ENCODE measurements at regions of chr12 and their contacts with region 1.

Region 1: DNA sequence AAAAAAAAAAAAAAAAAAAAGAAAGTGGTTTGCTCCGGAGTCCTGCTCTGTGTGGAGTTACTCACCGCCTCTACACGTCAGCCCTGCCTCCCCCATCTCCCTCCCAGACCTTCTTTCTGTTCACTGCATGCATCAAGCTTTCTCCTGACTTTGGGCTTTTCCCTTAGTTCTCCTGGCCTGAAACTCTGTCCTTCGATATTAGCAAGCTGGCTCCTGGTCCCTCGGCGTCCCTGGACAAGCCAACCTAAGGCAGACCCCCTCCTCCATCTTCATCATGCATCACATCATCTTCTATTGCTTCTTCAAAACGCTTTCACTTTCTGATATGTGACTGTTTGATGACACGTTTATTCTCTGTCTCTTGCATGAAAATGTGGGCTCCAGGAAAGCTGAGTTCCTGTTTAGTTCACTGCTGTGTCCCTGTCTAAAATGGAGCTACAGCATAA is 40.6 kb downstream of the SLC15A4 start:
- DNase-seq: peak; percentile 70
- ATAC-seq: peak; percentile 91
- H3K4me3 Mint-ChIP-seq: peak overlapping the region; percentile 61
- H3K27ac Mint-ChIP-seq: peak overlapping the region; percentile 98
- H3K4me1 Mint-ChIP-seq: peaks cover 12% of the 10 kb centered on the region
- H3K27me3 Mint-ChIP-seq: no peaks in the 10 kb centered on the region

Region 2: DNA sequence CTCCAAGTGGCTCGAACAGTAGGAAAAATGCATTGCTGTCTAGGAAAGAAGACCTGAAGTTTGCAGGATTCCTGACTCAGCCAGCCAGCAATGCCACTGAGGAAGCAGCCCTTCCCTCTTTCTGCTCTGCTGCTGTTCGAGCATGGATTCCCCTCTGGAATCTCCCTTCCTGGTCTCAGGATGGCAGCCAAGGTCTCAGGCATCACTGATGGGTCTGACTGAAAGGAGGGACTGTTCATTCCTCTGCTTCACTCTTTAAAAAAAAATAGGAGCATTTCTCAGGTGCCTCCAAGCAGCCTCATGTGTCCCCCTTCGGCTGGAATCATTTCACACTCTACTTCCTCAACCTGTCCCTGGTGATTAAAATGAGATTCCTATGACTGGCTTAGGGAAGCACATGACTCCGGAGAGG is 21.8 kb before region 1 on chr12:
- CTCF ChIA-PET with region 1: no interaction called
- POLR2A ChIA-PET with region 1: no interaction called
- intact Hi-C with region 1: no loop called
- DNase-seq: no peak
- ATAC-seq: no peak
- H3K4me3 Mint-ChIP-seq: no peak overlapping the region
- H3K27ac Mint-ChIP-seq: no peak overlapping the region
- H3K4me1 Mint-ChIP-seq: no peaks in the 10 kb centered on the region
- H3K27me3 Mint-ChIP-seq: peaks cover 8% of the 10 kb centered on the region

Region 3: DNA sequence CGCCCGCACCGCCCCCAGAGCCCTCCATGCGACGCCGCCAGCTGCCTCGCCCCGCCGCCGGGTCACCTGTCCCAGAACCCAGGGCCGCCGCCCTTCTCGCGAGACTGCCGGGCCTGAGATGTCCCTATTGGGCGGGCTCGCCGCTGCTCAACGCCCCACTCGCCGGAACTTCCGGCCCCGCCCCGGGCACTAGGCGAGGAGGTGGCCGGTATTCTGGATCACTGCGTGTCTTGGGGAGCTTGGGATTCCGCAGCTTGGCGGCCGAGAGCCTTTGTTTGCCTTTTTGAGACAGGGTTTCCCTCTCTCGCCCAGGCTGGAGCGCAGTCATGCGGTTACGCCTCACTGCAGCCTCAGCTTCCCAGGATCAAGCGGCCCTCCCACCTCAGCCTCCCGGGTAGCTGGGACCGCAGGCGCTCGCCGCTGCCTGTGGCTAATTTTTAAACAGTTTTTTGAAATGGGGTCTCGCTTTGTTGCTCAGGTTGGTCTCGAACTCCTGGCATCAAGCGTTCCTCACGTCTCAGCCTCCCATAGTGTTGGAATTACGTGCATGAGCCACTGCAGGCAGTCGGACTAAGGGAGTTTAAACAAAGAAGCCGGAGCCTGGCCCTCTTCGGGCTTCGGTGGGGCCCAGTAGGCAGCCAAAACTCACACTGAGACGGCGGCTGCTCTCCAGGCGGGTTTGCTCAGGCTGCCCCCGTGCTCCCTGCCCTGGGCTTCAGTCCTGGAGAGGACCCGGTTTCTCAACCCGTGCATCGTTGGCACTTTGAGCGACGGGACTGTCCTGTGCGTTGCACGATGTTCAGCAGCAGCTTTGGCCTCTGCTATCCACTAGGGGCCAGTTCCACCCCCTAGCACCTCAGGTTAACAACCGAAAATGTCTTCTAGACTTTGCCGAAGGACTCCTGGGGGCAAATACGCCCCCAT is 41.0 kb after region 1 on chr12 and contains the start of gene SLC15A4:
- CTCF ChIA-PET with region 1: interaction called, 5 read pairs
- POLR2A ChIA-PET with region 1: no interaction called
- intact Hi-C with region 1: loop called (anchors 1 to 2 kb)
- DNase-seq: peak; percentile 98
- ATAC-seq: peak; percentile 94
- H3K4me3 Mint-ChIP-seq: peak within 1 kb of the TSS; percentile 86
- H3K27ac Mint-ChIP-seq: peak within 1 kb of the TSS; percentile 55
- H3K4me1 Mint-ChIP-seq: peaks cover 29% of the 10 kb centered on the region
- H3K27me3 Mint-ChIP-seq: peaks cover 8% of the 10 kb centered on the region
- total RNA-seq, gene SLC15A4: 24.2 to 25.9 TPM

Region 4: DNA sequence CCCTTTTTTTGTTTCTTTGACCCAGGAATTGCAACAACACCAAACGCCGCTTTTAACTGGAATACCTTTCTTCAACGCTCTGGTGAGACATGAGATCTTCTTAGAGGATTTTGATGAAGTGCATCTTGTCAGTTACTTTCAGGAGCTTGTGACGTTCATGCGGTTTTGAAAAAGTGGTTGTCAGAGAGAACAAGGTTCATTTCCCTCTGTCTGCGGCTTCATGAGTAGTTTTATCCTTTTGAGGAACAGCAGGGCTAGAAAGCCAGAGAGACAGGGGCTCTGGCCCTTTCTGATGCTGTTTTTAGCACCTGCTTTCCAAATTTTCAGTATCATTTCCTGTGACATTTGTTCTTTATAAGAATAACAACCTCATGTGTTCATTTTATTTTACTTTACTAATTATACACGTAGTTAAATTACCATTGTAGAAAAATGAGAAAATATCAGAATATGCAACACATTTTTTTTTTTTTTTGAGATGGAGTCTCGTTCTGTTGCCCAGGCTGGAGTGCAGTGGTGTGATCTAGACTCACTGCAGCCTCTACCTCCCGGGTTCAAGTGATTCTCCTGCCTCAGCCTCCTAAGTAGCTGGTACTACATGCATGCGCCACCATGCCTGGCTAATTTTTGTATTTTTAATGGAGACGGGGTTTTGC is 131.9 kb after region 1 on chr12:
- CTCF ChIA-PET with region 1: interaction called, 3 read pairs
- POLR2A ChIA-PET with region 1: no interaction called
- intact Hi-C with region 1: loop called (anchors 1 to 2 kb)
- DNase-seq: peak; percentile 76
- ATAC-seq: peak; percentile 83
- H3K4me3 Mint-ChIP-seq: peak overlapping the region; percentile 6
- H3K27ac Mint-ChIP-seq: peak overlapping the region; percentile 78
- H3K4me1 Mint-ChIP-seq: peaks cover 59% of the 10 kb centered on the region
- H3K27me3 Mint-ChIP-seq: no peaks in the 10 kb centered on the region